MCF 10A (cell line): ENCODE measurements at regions of chr19 and their contacts with region 1.

Region 1: GRCh38 chr19:54017261-54017660 is 25.8 kb downstream of the CACNG6 start:
- DNase-seq: no peak
- H3K4me3 Mint-ChIP-seq: no peak overlapping the region
- H3K27ac Mint-ChIP-seq: no peak overlapping the region
- H3K4me1 Mint-ChIP-seq: peaks cover 10% of the 10 kb centered on the region
- H3K27me3 Mint-ChIP-seq: no peaks in the 10 kb centered on the region
- CTCF ChIP-seq: no peak

Region 2: DNA sequence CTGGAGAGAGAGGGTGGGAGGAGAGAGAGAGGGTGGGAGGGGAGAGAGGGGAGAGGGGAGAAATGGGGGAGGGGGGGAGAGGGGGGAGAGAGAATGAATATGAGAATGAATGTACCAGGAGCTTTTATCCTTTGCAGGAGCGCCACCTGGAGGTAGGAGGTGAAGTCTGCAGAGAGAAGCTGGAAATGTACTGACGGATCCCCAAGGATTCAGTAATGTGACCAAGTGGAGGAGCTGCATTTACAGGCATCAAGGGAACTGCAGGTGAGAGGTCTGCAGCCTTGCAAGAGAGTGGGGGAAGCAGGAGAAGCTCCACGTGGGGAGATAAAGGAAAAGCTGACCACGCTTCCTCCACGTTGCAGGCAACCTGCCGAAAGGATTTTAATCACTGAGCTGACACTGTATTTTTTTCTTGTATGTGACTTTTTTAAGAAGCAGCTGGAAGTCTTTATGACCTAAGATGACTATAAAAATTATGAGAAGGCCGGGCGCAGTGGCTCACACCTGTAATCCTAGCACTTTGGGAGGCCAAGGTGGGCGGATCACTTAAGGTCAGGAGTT is 12.7 kb after region 1 on chr19:
- CTCF ChIA-PET with region 1: interaction called, 26 read pairs
- POLR2A ChIA-PET with region 1: no interaction called
- intact Hi-C with region 1: no loop called
- DNase-seq: peak; percentile 82
- H3K4me3 Mint-ChIP-seq: no peak overlapping the region
- H3K27ac Mint-ChIP-seq: no peak overlapping the region
- H3K4me1 Mint-ChIP-seq: peaks cover 6% of the 10 kb centered on the region
- H3K27me3 Mint-ChIP-seq: no peaks in the 10 kb centered on the region
- CTCF ChIP-seq: peak; percentile 49

Region 3: DNA sequence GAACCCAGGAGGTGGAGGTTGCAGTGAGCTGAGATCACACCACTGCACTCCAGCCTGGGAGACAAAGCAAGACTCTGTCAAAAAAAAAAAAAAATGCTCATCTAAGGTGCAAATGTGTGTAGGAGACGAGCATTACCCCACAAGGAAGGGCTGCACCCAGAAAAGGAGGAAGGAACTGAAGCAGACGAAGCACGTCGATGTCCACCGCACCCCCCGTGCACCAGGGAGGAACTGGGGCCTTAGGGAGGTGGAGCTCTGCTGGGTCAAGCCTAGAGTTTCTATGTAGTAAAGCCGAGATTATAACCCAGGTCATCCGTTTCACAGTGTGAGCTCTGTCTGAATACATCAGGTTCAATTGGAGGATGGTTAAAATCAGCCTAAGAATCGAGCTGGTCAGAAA is 45.4 kb after region 1 on chr19:
- CTCF ChIA-PET with region 1: no interaction called
- POLR2A ChIA-PET with region 1: no interaction called
- intact Hi-C with region 1: no loop called
- DNase-seq: no peak
- H3K4me3 Mint-ChIP-seq: no peak overlapping the region
- H3K27ac Mint-ChIP-seq: no peak overlapping the region
- H3K4me1 Mint-ChIP-seq: no peaks in the 10 kb centered on the region
- H3K27me3 Mint-ChIP-seq: no peaks in the 10 kb centered on the region
- CTCF ChIP-seq: no peak

Region 4: GRCh38 chr19:54084410-54084809 is 67.1 kb after region 1 on chr19:
- CTCF ChIA-PET with region 1: no interaction called
- POLR2A ChIA-PET with region 1: no interaction called
- intact Hi-C with region 1: no loop called
- DNase-seq: no peak
- H3K4me3 Mint-ChIP-seq: no peak overlapping the region
- H3K27ac Mint-ChIP-seq: no peak overlapping the region
- H3K4me1 Mint-ChIP-seq: no peaks in the 10 kb centered on the region
- H3K27me3 Mint-ChIP-seq: no peaks in the 10 kb centered on the region
- CTCF ChIP-seq: no peak

Region 5: DNA sequence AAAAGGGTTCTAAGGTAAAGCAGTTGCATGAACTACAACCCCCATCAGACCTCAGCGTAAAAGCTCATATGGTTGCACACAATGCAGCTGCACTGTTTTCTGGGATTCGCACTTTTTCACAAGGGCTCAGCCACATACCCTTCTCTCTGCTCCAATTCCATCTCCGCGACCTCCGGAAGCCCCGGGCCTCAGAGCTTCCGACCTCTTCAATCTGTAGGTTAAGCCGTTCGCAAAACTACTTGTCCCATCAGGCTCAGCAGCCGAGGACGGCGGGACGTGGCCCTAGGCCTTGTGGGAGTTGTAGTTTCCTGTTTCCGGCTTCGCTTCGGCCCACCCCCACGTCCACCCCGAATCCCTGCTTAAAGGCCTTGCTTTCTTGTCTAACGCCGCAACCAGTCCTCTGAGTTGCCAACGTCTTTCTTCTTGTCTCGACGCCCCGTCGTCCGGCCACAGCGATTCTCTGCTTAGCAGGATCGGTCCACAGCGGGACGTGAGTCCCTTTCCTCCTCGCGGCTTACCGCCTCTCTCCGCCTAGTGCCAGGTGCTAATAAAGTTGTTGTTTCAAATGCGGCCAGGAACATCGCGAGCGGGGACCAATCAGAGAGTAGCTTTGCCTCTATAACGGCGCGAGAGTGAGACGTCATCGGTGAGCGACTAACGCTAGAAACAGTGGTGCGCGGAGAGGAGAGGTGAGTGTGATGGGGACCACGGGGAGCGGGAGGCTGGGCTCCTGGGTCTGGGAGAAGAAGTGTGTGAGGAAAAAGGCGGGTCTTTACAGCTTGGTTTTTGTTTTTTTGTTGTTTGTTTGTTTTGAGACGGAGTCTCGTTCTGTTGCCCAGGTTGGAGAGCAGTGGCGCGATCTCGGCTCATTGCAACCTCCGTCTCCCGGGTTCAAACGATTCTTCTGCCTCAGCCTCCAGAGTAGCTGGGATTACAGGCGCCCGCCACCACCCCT is 98.1 kb after region 1 on chr19 and contains the starts of genes PRPF31 and TFPT:
- CTCF ChIA-PET with region 1: no interaction called
- POLR2A ChIA-PET with region 1: no interaction called
- intact Hi-C with region 1: no loop called
- DNase-seq: peak; percentile 99
- H3K4me3 Mint-ChIP-seq: peak within 1 kb of the TSS; percentile 84
- H3K27ac Mint-ChIP-seq: peak within 1 kb of the TSS; percentile 98
- H3K4me1 Mint-ChIP-seq: peaks cover 6% of the 10 kb centered on the region
- H3K27me3 Mint-ChIP-seq: no peaks in the 10 kb centered on the region
- CTCF ChIP-seq: no peak
- total RNA-seq, gene PRPF31: 52.8 and 59.7 TPM in 2 replicates
- total RNA-seq, gene TFPT: 15.6 and 22.8 TPM in 2 replicates